Mucosa of descending colon (tissue), 3 donors: ENCODE measurements at regions of chr19 and their contacts with region 1.

Region 1: DNA sequence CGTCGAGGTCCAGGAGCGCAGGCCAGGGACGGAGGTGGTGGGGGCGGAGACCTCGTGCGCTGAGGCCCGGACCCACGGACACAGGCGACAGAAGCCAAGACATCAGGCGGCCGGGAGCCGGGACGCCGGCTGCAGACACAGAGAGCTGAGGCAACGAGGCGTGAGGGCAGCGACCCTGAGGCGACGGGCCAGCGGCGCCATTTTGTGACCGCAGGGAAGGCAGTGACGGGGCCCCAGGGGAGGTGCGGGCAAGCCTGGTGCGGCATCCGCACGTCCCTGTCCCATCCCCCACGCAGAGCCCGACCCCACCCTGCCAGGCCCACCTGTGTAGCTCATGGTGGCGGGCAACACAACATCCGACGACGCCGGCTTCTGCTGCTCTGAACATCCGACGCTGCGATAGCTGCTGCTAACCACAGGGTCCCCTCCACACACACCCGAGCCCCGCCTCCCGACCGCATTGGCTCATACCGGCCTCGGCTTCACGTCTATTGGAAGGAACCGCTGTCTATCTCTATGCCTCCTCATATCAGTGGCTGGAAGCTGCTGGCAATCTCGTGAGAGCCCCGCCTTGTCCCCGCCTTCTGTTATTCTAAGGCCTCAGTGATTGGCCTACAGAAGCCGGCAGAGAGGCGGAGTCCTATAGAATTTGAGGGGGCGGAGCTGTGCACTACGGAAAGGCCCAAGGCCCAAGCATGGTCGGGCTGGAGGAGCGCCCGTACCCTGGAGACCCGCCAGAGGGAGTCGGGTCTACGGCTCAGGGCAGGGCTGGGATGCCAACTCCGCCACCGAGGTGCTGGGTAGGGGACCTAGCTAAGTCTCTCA is at the start of gene AKAP8L:
- DNase-seq: peak; percentile 97 to 100 (median 98)
- ATAC-seq: peak; percentile 96
- H3K4me3 ChIP-seq: peak within 1 kb of the TSS; percentile 98
- H3K4me1 ChIP-seq: peaks cover 16% of the 10 kb centered on the region
- CTCF ChIP-seq: peak; percentile 70
- total RNA-seq, gene AKAP8L: 74.4 to 111 (median 96.0) TPM

Region 2: GRCh38 chr19:15251749-15252397 is 166.9 kb before region 1 on chr19:
- intact Hi-C with region 1: loop called in 1 of 2 experiments (anchors 10 kb)
- DNase-seq: peak; percentile 51 to 74 (median 63)
- ATAC-seq: peak; percentile 24
- H3K4me3 ChIP-seq: no peak overlapping the region
- H3K4me1 ChIP-seq: peaks cover 37% of the 10 kb centered on the region
- CTCF ChIP-seq: no peak

Region 3: DNA sequence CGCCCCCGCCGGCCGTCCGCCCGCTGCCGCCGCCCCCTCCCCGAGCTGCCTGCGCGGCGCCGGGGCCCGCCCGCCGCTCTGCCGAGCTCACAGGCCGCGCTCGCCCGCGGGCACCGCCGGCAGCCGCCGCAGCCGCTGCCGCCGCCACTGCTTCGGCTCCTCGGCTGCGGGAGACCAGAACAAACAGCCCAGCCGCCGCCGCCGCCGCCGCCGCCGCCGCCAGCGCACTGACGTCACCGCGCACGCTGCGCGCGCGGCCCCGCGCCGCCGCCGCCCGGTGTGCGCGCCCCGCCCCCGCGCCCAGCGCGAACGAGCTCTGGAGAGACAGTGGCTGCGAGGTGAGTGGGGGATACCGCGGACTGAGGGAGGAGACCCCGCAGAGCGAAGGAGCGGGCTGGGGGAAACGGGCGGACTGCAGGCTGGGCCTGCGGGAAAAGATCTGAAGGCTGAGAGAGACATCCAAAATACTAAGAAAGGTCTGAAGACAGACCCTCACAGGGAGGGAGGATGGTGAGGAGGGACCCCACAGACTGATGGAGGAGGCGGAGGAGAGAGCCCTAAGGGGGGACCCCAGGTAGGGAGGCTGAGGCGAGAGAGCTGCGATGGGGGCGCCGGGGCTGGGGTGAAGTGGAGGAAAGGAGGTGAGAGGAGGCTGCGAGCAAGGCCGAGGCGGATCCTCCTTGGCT is 86.3 kb before region 1 on chr19 and contains the start of gene BRD4:
- intact Hi-C with region 1: no loop called
- DNase-seq: peak; percentile 84 to 85 (median 85)
- ATAC-seq: peak; percentile 89
- H3K4me3 ChIP-seq: peak within 1 kb of the TSS; percentile 94
- H3K4me1 ChIP-seq: peaks cover 31% of the 10 kb centered on the region
- CTCF ChIP-seq: no peak
- total RNA-seq, gene BRD4: 78.3 to 104 (median 82.6) TPM